Right ventricle myocardium superior (tissue), 1 donor: ENCODE measurements at regions of chr19 and their contacts with region 1.

Region 1: GRCh38 chr19:10189616-10190015 is 5.1 kb downstream of the DNMT1 start:
- DNase-seq: no peak
- ATAC-seq: no peak

Region 2: GRCh38 chr19:10085641-10086590 is 103.7 kb before region 1 on chr19 and contains the start of gene SHFL:
- intact Hi-C with region 1: no loop called
- DNase-seq: peak; percentile 88
- ATAC-seq: peak; percentile 96
- total RNA-seq, gene SHFL: 8.5 TPM

Region 3: DNA sequence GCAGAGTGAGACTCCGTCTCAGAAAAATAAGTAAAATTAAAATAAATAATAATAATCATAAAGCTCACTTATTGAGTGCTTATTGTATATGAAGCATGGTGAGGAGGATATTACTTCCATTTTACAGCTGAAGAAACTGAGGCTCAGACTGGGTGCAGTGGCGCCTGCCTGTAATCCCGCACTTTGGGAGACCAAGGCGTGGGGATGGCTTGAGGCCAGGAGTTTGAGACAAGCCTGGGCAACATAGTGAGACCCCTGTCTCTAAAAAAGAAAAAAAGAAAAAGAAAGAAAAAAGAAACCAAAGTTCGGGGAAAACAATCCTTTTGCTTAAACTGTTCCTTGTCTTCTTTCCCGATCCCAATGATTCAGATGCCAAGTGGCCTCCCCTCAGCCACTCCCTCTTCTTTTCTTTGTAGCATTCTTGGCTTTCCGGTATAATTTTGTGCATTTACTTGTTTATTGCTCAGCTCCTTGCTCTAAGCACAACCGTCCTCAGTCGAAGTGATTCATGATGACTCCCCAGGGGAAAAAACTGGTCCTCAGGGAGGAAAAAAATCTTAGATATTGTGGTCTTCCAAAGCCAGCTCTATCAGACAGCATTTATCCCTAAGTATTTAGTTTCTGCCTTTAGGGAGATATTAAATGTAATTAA is 69.0 kb before region 1 on chr19:
- intact Hi-C with region 1: loop called (anchors 10 kb)
- DNase-seq: no peak
- ATAC-seq: peak; percentile 10

Region 4: DNA sequence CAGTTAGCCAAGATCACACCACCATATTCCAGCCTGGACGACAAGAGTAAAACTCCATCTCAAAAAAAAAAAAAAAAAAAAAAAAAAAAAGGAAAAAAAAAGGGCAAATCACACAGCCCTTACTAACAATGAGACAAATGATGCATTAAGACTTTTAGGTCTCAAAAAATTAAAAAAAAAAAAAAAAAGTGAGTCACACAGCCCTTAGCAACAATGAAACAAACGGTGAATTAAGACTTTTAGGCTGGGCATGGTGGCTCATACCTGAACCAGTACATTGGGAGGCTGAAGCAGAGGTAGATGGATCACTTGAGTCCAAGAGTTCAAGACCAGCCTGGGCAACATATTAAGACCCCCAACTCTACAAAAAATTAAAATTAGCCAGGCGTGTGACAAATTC is 37.5 kb before region 1 on chr19:
- intact Hi-C with region 1: no loop called
- DNase-seq: no peak
- ATAC-seq: no peak

Region 5: DNA sequence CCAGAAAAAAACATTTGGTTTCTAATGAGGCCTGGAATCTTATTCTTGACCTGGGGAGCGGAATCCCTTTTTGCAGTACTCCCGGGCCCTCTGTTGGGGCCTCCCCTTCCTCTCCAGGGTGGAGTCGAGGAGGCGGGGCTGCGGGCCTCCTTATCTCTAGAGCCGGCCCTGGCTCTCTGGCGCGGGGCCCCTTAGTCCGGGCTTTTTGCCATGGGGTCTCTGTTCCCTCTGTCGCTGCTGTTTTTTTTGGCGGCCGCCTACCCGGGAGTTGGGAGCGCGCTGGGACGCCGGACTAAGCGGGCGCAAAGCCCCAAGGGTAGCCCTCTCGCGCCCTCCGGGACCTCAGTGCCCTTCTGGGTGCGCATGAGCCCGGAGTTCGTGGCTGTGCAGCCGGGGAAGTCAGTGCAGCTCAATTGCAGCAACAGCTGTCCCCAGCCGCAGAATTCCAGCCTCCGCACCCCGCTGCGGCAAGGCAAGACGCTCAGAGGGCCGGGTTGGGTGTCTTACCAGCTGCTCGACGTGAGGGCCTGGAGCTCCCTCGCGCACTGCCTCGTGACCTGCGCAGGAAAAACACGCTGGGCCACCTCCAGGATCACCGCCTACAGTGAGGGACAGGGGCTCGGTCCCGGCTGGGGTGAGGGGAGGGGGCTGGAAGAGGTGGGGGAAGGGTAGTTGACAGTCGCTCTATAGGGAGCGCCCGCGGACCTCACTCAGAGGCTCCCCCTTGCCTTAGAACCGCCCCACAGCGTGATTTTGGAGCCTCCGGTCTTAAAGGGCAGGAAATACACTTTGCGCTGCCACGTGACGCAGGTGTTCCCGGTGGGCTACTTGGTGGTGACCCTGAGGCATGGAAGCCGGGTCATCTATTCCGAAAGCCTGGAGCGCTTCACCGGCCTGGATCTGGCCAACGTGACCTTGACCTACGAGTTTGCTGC is 97.5 kb after region 1 on chr19 and contains the start of gene ICAM4:
- intact Hi-C with region 1: no loop called
- DNase-seq: peak; percentile 91
- ATAC-seq: peak; percentile 67
- total RNA-seq, gene ICAM4: 0.46 TPM